Activated CD4-positive, alpha-beta memory T cell treated with anti-CD3 and anti-CD28 coated beads, Interleukin-2, amount 10 ng/mL, durations not matched to agents 7 days and 5 days (primary cell): ENCODE measurements at regions of chr6 and their contacts with region 1.

Region 1: GRCh38 chr6:30541515-30542403 is 14.5 kb downstream of the GNL1 start:
- DNase-seq: peak; percentile 83
- H3K4me3 Mint-ChIP-seq: peak overlapping the region; percentile 75
- H3K27ac Mint-ChIP-seq: peak overlapping the region; percentile 77
- H3K4me1 Mint-ChIP-seq: peaks cover 34% of the 10 kb centered on the region
- H3K27me3 Mint-ChIP-seq: no peaks in the 10 kb centered on the region

Region 2: DNA sequence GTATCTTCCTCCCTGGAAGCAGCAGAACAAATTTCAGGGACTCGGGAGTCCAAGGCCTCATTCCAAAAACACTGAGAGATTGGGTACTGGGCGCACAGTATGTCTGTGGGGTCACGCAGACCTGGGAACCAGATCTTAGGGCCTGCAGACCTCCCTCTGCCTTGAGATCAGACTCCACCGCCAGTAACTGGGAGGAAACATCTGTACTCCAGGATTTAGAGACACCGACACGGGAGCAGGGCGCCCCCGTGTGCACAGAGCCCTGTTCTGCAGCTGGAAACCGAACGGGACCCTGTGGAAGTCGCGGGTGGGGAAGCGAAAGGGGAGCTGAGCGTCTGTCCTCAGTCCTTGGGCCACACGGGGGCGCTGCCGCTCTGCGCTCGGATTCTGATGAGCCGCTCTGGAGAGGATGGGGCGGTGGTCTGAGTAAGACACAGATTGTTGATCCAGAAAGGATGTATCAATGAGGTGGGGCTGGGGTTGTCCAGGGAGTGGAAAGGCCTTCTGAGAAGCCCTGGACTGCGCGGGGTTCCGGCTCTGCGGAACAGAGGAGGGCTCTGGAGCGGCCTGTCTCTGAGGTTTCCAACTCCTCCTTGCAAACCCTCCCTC is 88.1 kb before region 1 on chr6:
- CTCF ChIA-PET with region 1: interaction called, 14 read pairs
- POLR2A ChIA-PET with region 1: no interaction called
- DNase-seq: peak; percentile 81
- H3K4me3 Mint-ChIP-seq: no peak overlapping the region
- H3K27ac Mint-ChIP-seq: no peak overlapping the region
- H3K4me1 Mint-ChIP-seq: peaks cover 30% of the 10 kb centered on the region
- H3K27me3 Mint-ChIP-seq: peaks cover 87% of the 10 kb centered on the region

Region 3: GRCh38 chr6:30489081-30490025 is 52.4 kb before region 1 on chr6 and contains the start of gene HLA-E:
- CTCF ChIA-PET with region 1: interaction called, 267 read pairs
- POLR2A ChIA-PET with region 1: interaction called, 119 read pairs
- DNase-seq: peak; percentile 93
- H3K4me3 Mint-ChIP-seq: peak within 1 kb of the TSS; percentile 100
- H3K27ac Mint-ChIP-seq: peak within 1 kb of the TSS; percentile 98
- H3K4me1 Mint-ChIP-seq: peaks cover 50% of the 10 kb centered on the region
- H3K27me3 Mint-ChIP-seq: peaks cover 15% of the 10 kb centered on the region
- total RNA-seq, gene HLA-E: 757 to 767 TPM

Region 4: GRCh38 chr6:30508890-30509736 is 32.6 kb before region 1 on chr6:
- CTCF ChIA-PET with region 1: interaction called, 29 read pairs
- POLR2A ChIA-PET with region 1: interaction called, 8 read pairs
- DNase-seq: no peak
- H3K4me3 Mint-ChIP-seq: peak overlapping the region; percentile 50
- H3K27ac Mint-ChIP-seq: peak overlapping the region; percentile 89
- H3K4me1 Mint-ChIP-seq: peaks cover 46% of the 10 kb centered on the region
- H3K27me3 Mint-ChIP-seq: no peaks in the 10 kb centered on the region

Region 5: DNA sequence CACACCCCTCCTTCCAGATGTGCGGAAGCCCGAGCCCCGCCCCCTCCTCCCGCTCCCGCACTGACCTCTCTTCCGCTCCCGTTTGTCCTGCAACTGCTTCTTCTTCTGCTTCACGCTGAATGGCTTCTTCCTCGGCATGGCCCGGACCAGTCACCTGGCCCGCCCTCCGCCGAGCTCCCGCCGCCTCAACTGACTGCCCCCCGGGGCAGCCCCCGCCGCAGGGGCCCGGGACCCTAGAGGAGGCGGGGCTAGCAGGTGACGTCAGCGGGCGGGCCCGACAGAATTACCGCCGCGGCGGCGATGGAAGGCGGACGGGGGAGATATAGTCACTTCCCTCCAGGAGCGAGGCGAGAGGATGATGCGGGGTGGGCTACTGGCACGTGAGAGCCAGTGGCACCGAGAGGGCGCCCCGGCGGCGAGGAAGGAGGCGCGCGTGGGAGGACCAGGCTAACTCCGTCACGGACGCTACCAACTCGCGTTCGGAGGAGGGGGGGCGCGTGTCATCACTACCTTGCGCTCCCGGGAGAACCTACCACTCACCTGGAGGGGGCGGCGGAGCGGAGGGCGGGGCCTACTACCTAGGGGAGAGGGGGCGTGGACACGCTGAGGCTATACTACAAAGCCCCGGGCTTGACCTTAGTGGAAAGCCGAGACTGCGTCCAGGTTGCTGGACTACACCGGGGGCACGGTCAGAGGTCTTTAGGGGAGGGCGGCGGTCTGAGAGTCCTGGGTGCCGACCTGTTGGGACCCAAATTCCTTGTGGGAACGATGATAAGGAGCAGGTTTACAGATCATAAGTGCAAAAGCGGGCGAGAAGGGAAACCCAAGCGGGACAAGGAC is 14.5 kb after region 1 on chr6 and contains the start of gene GNL1:
- CTCF ChIA-PET with region 1: interaction called, 63 read pairs
- POLR2A ChIA-PET with region 1: interaction called, 73 read pairs
- DNase-seq: peak; percentile 98
- H3K4me3 Mint-ChIP-seq: peak within 1 kb of the TSS; percentile 95
- H3K27ac Mint-ChIP-seq: peak within 1 kb of the TSS; percentile 99
- H3K4me1 Mint-ChIP-seq: peaks cover 45% of the 10 kb centered on the region
- H3K27me3 Mint-ChIP-seq: no peaks in the 10 kb centered on the region
- total RNA-seq, gene GNL1: 62.1 to 70.8 TPM

Region 6: DNA sequence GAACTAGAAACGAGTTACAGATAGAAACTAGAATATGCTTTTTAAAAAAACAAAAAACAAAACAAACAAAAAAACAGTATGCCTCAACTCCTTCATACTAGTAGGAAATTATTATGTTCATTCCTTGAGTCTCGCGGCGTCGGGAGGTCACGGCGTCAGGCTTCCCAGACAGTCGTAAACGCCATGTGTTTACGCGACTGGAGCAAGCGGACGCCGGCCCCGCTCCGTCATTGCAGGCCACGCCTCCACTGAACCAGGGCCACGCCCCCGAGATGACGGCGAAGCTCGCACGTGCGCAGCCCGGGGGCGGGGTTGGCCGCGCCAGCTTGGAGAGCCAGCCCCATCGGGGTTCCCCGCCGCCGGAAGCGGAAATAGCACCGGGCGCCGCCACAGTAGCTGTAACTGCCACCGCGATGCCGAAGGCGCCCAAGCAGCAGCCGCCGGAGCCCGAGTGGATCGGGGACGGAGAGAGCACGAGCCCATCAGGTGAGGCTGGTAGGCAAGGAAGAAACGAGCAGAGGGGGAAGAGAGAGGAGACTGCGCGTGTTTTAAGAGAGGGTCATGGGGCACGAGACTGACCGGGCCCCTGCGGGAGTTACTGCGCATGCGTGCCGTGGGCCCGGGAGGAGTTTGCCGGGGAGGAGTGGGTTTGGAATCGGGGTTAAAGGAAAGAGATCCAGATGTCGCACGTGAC is 29.5 kb after region 1 on chr6 and contains the start of gene ABCF1:
- CTCF ChIA-PET with region 1: interaction called, 15 read pairs
- POLR2A ChIA-PET with region 1: interaction called, 13 read pairs
- DNase-seq: peak; percentile 99
- H3K4me3 Mint-ChIP-seq: peak within 1 kb of the TSS; percentile 97
- H3K27ac Mint-ChIP-seq: peak within 1 kb of the TSS; percentile 97
- H3K4me1 Mint-ChIP-seq: peaks cover 63% of the 10 kb centered on the region
- H3K27me3 Mint-ChIP-seq: no peaks in the 10 kb centered on the region
- total RNA-seq, gene ABCF1: 64.3 to 65.2 TPM

Region 7: DNA sequence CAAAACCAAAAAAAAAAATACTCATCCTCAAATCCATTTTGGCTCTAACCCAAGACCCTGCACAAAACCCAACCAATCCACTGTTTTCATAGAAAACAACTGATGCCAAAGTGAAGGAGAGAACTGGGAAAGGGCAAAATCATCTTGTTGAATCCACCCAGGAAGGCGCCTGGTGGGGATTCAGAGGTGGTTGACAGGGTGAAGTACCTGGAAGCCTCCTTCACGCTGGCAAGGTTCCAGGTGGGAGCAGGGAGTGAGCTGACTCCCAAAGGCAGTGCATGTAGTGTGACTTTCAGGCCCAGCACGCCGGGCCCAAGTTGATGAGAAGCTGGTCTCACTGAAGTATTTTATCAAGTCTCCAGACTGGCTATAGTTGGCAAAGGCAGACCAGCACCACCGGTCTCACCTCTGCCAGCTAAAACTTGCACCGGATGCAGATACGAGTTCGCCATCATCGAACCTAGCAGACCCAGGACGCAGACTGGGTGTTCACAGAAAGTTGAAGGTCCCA is 58.7 kb after region 1 on chr6:
- CTCF ChIA-PET with region 1: interaction called, 48 read pairs
- POLR2A ChIA-PET with region 1: interaction called, 27 read pairs
- DNase-seq: no peak
- H3K4me3 Mint-ChIP-seq: no peak overlapping the region
- H3K27ac Mint-ChIP-seq: no peak overlapping the region
- H3K4me1 Mint-ChIP-seq: peaks cover 22% of the 10 kb centered on the region
- H3K27me3 Mint-ChIP-seq: no peaks in the 10 kb centered on the region